ENCODE measurements at regions of chr18 and their contacts with region 1.

Region 1: DNA sequence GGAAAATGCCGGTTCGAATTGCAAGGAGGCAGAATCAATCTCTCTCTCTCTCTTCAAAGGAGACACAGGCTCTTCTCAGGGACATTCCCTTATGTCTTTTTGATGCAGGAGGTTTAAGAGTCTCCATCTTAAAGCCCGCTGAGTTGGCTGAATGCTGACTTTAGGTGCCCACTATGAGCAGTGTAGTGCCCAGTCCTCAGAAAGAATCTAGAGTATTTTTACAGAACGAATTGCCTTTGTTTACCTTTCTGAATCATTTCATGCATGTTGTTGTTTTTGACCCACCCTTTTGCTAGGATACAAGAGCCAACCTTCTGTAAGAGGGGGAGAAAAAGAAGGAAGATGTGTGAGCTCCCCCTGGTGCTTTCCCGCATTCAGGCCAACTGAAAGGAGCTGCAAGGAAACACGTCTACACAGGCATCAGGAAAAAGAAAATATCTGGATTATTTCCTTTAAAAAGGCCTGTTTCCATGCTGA is 193.5 kb upstream of the TCF4 start:
- DNase-seq: peak; percentile 10 to 23
- H3K4me3 ChIP-seq: no peak overlapping the region
- H3K27ac ChIP-seq: no peak overlapping the region
- H3K4me1 ChIP-seq: no peaks in the 10 kb centered on the region
- H3K27me3 ChIP-seq: no peaks in the 10 kb centered on the region
- CTCF ChIP-seq: peak in 4 of 6 experiments; percentile 10 to 46 (median 23)
- POLR2A ChIP-seq: no peak

Region 2: GRCh38 chr18:55415258-55415871 is 366.2 kb before region 1 on chr18:
- intact Hi-C with region 1: loop called (anchors 10 kb)
- DNase-seq: peak; percentile 85 to 90
- H3K4me3 ChIP-seq: no peak overlapping the region
- H3K27ac ChIP-seq: no peak overlapping the region
- H3K4me1 ChIP-seq: no peaks in the 10 kb centered on the region
- H3K27me3 ChIP-seq: no peaks in the 10 kb centered on the region
- CTCF ChIP-seq: peak; percentile 69 to 93 (median 81)
- POLR2A ChIP-seq: no peak

Region 3: GRCh38 chr18:55452123-55452611 is 329.4 kb before region 1 on chr18:
- intact Hi-C with region 1: no loop called
- DNase-seq: peak; percentile 11 to 14
- H3K4me3 ChIP-seq: no peak overlapping the region
- H3K27ac ChIP-seq: no peak overlapping the region
- H3K4me1 ChIP-seq: peaks cover 0 to 11% of the 10 kb centered on the region in 2 donors
- H3K27me3 ChIP-seq: no peaks in the 10 kb centered on the region
- CTCF ChIP-seq: no peak
- POLR2A ChIP-seq: no peak

Measured in thyroid gland (tissue), 4 donors.